ENCODE measurements at regions of chr5 and their contacts with region 1.

Region 1: GRCh38 chr5:143824851-143825720 is 13.1 kb downstream of the HMHB1 start:
- DNase-seq: peak; percentile 76 to 92
- ATAC-seq: peak; percentile 88 to 98 (median 97)
- H3K4me3 ChIP-seq: no peak overlapping the region
- H3K4me3 Mint-ChIP-seq: no peak overlapping the region
- H3K27ac ChIP-seq: no peak overlapping the region
- H3K27ac Mint-ChIP-seq: no peak overlapping the region
- H3K4me1 ChIP-seq: peaks cover 6% of the 10 kb centered on the region
- H3K4me1 Mint-ChIP-seq: peaks cover 8 to 9% of the 10 kb centered on the region in 2 donors
- H3K27me3 ChIP-seq: no peaks in the 10 kb centered on the region
- H3K27me3 Mint-ChIP-seq: no peaks in the 10 kb centered on the region
- CTCF ChIP-seq: peak; percentile 94

Region 2: DNA sequence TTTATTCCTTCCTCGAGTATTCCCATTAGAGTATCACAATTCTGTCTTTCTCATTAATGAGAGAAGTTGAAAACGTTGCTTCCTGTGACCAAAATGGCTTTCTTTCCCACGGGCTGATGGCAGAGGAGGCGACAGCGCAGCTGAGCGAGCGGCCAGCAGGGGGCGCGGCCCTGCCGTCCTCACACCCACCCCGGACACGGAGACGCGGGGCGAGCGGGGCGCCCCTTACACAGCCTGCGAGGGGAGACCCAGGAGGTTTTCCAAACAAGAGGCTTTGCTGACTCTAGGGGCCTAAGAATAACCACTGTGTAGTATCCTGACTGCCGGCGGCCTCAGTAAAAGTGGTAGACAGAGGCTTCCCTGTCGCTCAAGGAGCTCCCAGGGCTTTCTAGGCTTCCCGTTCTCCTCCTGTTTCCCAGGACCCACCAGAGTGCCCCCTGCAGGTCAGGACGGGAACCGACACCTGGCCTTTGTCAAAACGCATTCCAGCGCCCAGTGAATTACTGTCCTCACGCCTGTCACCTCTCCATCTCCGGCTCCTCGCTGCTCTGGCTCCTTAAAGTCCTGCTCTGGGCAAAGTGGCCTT is 1111.9 kb before region 1 on chr5:
- intact Hi-C with region 1: loop called (anchors 10 kb)
- DNase-seq: peak; percentile 83 to 93
- ATAC-seq: peak; percentile 92 to 93 (median 93)
- H3K4me3 ChIP-seq: peak overlapping the region; percentile 26
- H3K4me3 Mint-ChIP-seq: peak overlapping the region; percentile 75
- H3K27ac ChIP-seq: no peak overlapping the region
- H3K27ac Mint-ChIP-seq: peak overlapping the region; percentile 64 to 81
- H3K4me1 ChIP-seq: peaks cover 36% of the 10 kb centered on the region
- H3K4me1 Mint-ChIP-seq: peaks cover 43 to 44% of the 10 kb centered on the region in 2 donors
- H3K27me3 ChIP-seq: no peaks in the 10 kb centered on the region
- H3K27me3 Mint-ChIP-seq: peaks cover 0 to 7% of the 10 kb centered on the region in 2 donors
- CTCF ChIP-seq: peak; percentile 99

Region 3: DNA sequence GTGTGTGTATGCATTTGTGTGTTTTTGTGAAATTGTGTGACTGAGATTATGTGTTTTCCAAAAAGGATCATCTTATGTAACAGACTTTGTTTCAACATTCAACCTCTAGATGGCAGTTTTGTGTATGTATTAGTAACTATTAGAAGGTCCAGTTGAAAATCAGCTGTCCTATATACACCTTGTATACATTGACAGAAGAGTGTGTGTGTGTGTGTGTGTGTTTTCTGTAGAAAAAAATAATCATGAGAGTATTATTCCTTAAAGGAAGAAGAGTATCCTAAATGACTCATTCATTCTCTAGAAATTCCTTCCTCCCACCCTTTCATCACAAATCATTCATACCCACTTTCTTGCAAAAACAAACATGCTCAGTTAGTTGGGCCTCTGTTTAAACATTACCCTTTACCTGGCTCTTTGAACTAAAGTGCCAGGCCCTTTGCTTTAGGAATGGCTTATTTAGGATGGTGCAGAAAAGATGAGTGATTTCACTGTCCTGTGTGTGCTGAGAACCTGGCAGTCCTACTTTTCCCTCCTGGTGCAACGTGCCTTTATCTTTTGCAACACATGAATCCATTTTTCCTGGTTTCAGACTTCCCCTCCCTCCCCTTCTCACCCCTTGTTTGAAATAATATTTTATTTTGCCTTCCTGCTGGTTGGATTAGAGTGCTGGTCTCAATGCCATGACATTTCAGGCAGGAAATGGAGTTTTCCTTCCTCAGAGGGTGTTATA is 902.7 kb before region 1 on chr5:
- intact Hi-C with region 1: loop called (anchors 1 kb)
- DNase-seq: peak in 1 of 2 donors; percentile 60
- ATAC-seq: peak; percentile 52 to 66 (median 59)
- H3K4me3 ChIP-seq: no peak overlapping the region
- H3K4me3 Mint-ChIP-seq: no peak overlapping the region
- H3K27ac ChIP-seq: peak overlapping the region; percentile 0
- H3K27ac Mint-ChIP-seq: peak overlapping the region; percentile 86 to 98
- H3K4me1 ChIP-seq: peaks cover 28% of the 10 kb centered on the region
- H3K4me1 Mint-ChIP-seq: peaks cover 52 to 53% of the 10 kb centered on the region in 2 donors
- H3K27me3 ChIP-seq: no peaks in the 10 kb centered on the region
- H3K27me3 Mint-ChIP-seq: no peaks in the 10 kb centered on the region
- CTCF ChIP-seq: peak; percentile 49

Region 4: GRCh38 chr5:143195491-143195890 is 629.6 kb before region 1 on chr5:
- intact Hi-C with region 1: loop called (anchors 10 kb)
- DNase-seq: no peak
- ATAC-seq: no peak
- H3K4me3 ChIP-seq: no peak overlapping the region
- H3K4me3 Mint-ChIP-seq: no peak overlapping the region
- H3K27ac ChIP-seq: no peak overlapping the region
- H3K27ac Mint-ChIP-seq: no peak overlapping the region
- H3K4me1 ChIP-seq: no peaks in the 10 kb centered on the region
- H3K4me1 Mint-ChIP-seq: peaks cover 27 to 29% of the 10 kb centered on the region in 2 donors
- H3K27me3 ChIP-seq: no peaks in the 10 kb centered on the region
- H3K27me3 Mint-ChIP-seq: no peaks in the 10 kb centered on the region
- CTCF ChIP-seq: no peak

Region 5: DNA sequence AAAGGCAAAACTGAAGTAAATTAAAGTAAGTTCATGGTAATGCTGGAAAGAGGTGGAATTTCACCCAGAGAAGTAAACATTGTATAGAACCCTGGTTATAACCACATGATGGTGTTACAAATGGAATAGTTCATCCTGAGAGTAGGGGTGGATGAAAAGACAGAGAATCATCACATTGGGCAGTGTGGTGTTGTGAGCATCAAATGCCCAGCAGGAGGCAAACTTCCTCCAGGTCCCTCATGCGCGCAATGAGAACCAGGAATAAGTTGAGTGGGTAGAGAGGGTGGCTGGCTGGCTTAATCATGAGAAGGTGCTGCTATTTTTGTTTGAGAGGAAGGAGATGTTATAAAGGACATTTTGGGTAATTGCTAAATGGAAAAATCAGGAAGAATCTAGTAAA is 176.4 kb before region 1 on chr5:
- intact Hi-C with region 1: loop called (anchors 1 kb)
- DNase-seq: peak in 1 of 2 donors; percentile 44
- ATAC-seq: peak; percentile 37 to 63 (median 50)
- H3K4me3 ChIP-seq: no peak overlapping the region
- H3K4me3 Mint-ChIP-seq: no peak overlapping the region
- H3K27ac ChIP-seq: no peak overlapping the region
- H3K27ac Mint-ChIP-seq: no peak overlapping the region
- H3K4me1 ChIP-seq: no peaks in the 10 kb centered on the region
- H3K4me1 Mint-ChIP-seq: peaks cover 0 to 9% of the 10 kb centered on the region in 2 donors
- H3K27me3 ChIP-seq: no peaks in the 10 kb centered on the region
- H3K27me3 Mint-ChIP-seq: no peaks in the 10 kb centered on the region
- CTCF ChIP-seq: peak; percentile 34

Region 6: GRCh38 chr5:143782588-143783386 is 42.3 kb before region 1 on chr5:
- intact Hi-C with region 1: no loop called
- DNase-seq: no peak
- ATAC-seq: no peak
- H3K4me3 ChIP-seq: no peak overlapping the region
- H3K4me3 Mint-ChIP-seq: no peak overlapping the region
- H3K27ac ChIP-seq: no peak overlapping the region
- H3K27ac Mint-ChIP-seq: no peak overlapping the region
- H3K4me1 ChIP-seq: no peaks in the 10 kb centered on the region
- H3K4me1 Mint-ChIP-seq: no peaks in the 10 kb centered on the region
- H3K27me3 ChIP-seq: no peaks in the 10 kb centered on the region
- H3K27me3 Mint-ChIP-seq: peaks cover 4 to 8% of the 10 kb centered on the region in 2 donors
- CTCF ChIP-seq: no peak

Region 7: DNA sequence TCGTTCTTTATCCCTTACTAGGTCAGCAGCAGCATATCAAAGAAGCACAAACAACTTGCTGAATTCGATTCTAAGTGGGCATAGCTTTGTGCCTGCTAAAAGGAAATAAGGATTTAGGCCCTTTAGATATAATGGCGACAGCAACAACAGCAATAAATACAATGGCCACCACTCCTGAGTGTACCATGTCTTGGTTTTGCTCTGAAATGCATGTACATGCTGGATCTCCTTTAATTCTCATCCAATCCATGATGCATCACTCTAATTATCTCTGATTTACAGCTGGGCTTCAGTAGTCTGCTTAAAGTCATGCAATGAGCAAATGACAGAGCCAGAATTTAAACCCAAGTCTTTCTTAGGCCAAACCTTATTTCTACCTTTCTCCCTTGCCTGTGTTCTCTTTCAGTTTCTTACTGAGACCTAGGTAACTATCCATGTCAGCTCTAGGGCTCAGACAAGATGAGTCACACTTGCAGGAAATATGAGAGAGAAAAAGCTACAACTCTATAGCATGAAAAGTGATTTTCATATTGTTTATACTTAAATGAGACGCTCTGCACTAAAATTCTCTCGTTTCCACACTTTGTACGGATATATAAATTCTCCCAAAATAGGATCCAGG is 98.7 kb after region 1 on chr5:
- intact Hi-C with region 1: no loop called
- DNase-seq: no peak
- ATAC-seq: no peak
- H3K4me3 ChIP-seq: no peak overlapping the region
- H3K4me3 Mint-ChIP-seq: no peak overlapping the region
- H3K27ac ChIP-seq: no peak overlapping the region
- H3K27ac Mint-ChIP-seq: no peak overlapping the region
- H3K4me1 ChIP-seq: no peaks in the 10 kb centered on the region
- H3K4me1 Mint-ChIP-seq: no peaks in the 10 kb centered on the region
- H3K27me3 ChIP-seq: no peaks in the 10 kb centered on the region
- H3K27me3 Mint-ChIP-seq: peaks cover 13 to 27% of the 10 kb centered on the region in 2 donors
- CTCF ChIP-seq: no peak

Region 8: DNA sequence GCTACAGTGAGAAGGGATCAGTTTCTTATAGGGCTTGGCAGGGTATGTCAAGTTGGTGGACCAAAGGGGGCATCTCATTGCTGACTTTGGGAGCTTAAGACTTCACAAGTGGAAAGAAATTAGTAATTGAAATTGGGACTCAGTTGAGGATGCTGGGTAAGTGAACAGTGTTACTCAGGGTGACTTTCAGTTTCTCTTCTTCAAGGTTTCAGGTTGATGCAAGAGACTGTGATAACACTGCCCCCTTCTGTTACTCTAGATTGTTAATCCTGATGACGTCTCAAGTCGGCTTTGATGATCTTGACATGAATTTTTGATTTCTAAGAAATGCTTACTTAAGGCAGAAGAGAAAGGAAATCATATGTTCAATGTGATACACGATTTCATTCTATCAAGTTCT is 366.9 kb after region 1 on chr5:
- intact Hi-C with region 1: loop called (anchors 10 kb)
- DNase-seq: peak in 1 of 2 donors; percentile 92
- ATAC-seq: peak; percentile 72 to 89 (median 75)
- H3K4me3 ChIP-seq: no peak overlapping the region
- H3K4me3 Mint-ChIP-seq: no peak overlapping the region
- H3K27ac ChIP-seq: peak overlapping the region; percentile 76
- H3K27ac Mint-ChIP-seq: no peak overlapping the region
- H3K4me1 ChIP-seq: peaks cover 17% of the 10 kb centered on the region
- H3K4me1 Mint-ChIP-seq: peaks cover 30 to 37% of the 10 kb centered on the region in 2 donors
- H3K27me3 ChIP-seq: no peaks in the 10 kb centered on the region
- H3K27me3 Mint-ChIP-seq: peaks cover 13 to 14% of the 10 kb centered on the region in 2 donors
- CTCF ChIP-seq: peak; percentile 59

Measured in natural killer cell (primary cell).